Activated CD4-positive, alpha-beta T cell treated with anti-CD3 and anti-CD28 coated beads for 36 hours (primary cell): ENCODE measurements at regions of chr20 and their contacts with region 1.

Region 1: GRCh38 chr20:23086056-23086566 is at the start of gene CD93:
- DNase-seq: peak; percentile 63
- ATAC-seq: peak; percentile 99
- H3K4me3 Mint-ChIP-seq: peak within 1 kb of the TSS; percentile 20
- H3K27ac Mint-ChIP-seq: peak within 1 kb of the TSS; percentile 4
- H3K4me1 Mint-ChIP-seq: peaks cover 13% of the 10 kb centered on the region
- H3K27me3 Mint-ChIP-seq: no peaks in the 10 kb centered on the region
- total RNA-seq, gene CD93: 0.82 to 0.84 TPM

Region 2: DNA sequence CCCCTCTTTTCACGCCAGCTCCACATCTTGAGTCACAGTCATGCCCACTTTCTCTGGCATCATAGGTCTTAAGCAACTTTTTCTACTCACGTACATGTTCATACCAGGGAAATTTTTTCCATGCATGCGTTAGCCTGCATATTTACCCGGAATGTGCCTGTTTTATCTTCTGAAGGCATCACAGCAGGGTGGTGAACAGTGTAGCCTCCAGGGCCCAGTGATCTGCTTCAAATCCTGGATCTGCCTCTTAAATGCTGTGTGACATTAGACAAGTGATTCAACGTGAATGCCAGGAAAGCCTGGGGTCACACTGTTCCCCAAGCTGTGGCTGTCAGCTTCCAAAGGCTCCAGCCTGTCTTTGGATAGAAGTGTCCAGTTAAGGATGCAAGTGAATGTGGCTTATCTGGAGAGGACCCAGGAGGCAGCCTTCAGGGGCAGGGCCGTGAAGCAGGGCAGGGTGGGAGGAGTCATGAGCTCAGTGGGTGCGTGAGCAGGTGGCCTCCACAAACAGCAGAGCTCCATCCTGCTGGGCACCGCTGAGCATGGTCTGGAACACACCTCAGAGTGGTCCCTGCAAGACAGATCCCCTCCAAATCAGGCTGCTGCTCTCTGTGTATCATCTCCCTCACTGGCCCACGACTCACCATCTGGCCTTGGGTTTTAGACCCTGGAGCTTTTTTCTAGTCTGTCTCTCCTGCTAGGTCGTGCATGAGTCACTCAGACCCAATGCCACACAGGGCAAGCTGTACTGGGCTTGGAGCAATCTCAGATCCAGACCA is 30.4 kb after region 1 on chr20:
- CTCF ChIA-PET with region 1: no interaction called
- POLR2A ChIA-PET with region 1: no interaction called
- intact Hi-C with region 1: loop called in 1 of 2 experiments (anchors 5 kb)
- DNase-seq: no peak
- ATAC-seq: no peak
- H3K4me3 Mint-ChIP-seq: no peak overlapping the region
- H3K27ac Mint-ChIP-seq: no peak overlapping the region
- H3K4me1 Mint-ChIP-seq: peaks cover 4% of the 10 kb centered on the region
- H3K27me3 Mint-ChIP-seq: no peaks in the 10 kb centered on the region

Region 3: GRCh38 chr20:23147964-23148730 is 62.0 kb after region 1 on chr20:
- CTCF ChIA-PET with region 1: no interaction called
- POLR2A ChIA-PET with region 1: no interaction called
- intact Hi-C with region 1: loop called in 1 of 2 experiments (anchors 5 kb)
- DNase-seq: peak; percentile 76
- ATAC-seq: peak; percentile 93
- H3K4me3 Mint-ChIP-seq: no peak overlapping the region
- H3K27ac Mint-ChIP-seq: peak overlapping the region; percentile 88
- H3K4me1 Mint-ChIP-seq: peaks cover 29% of the 10 kb centered on the region
- H3K27me3 Mint-ChIP-seq: peaks cover 8% of the 10 kb centered on the region